Activated CD8-positive, alpha-beta T cell treated with anti-CD3 and anti-CD28 coated beads for 36 hours (primary cell): ENCODE measurements at regions of chr10 and their contacts with region 1.

Region 1: DNA sequence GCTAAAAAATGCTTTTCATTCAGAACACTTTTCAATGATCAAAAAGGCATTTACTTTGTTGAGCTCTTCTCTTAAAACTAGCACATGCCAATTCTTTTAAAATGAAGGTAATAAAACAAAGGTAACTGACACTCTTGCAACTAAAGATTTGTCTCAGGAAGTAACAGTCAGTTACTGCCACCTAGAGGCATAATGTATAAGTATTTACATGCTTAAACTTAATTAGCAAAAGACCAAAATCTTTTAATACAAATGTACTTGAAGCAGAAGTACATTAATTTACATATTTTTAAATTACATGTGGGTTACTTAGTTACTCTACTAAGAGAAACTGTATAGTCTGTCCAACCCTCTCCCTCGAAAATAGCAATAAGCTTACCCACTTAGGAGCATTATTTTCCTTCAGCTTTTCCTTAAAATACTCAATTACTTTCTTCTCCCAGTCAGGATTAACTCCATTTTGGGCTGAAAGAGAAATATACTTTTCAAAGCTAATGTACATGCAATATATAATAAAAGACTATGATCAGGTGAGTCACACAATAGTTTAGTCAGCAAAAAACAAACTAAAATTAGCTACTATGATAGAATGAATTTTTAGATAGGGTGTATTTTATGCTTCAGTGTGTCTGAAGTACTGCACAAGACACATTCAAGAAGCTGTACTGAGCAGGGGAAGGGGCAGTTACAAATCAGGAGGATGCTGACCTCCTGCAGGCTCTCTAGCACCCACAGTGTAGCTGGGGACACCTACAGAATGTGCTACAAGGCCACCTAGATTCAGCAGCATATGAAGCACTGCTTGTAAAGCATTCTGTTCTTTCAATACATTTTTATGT is 13.0 kb downstream of the MCMBP start:
- DNase-seq: no peak
- ATAC-seq: peak; percentile 55
- H3K4me3 Mint-ChIP-seq: no peak overlapping the region
- H3K27ac Mint-ChIP-seq: peak overlapping the region; percentile 10
- H3K4me1 Mint-ChIP-seq: peaks cover 40% of the 10 kb centered on the region
- H3K27me3 Mint-ChIP-seq: no peaks in the 10 kb centered on the region
- CTCF ChIP-seq: peak; percentile 83

Region 2: GRCh38 chr10:119693262-119693957 is 166.2 kb before region 1 on chr10:
- CTCF ChIA-PET with region 1: interaction called, 11 read pairs
- POLR2A ChIA-PET with region 1: no interaction called
- intact Hi-C with region 1: no loop called
- DNase-seq: peak; percentile 36
- ATAC-seq: peak; percentile 78
- H3K4me3 Mint-ChIP-seq: no peak overlapping the region
- H3K27ac Mint-ChIP-seq: no peak overlapping the region
- H3K4me1 Mint-ChIP-seq: peaks cover 7% of the 10 kb centered on the region
- H3K27me3 Mint-ChIP-seq: peaks cover 4% of the 10 kb centered on the region
- CTCF ChIP-seq: no peak

Region 3: DNA sequence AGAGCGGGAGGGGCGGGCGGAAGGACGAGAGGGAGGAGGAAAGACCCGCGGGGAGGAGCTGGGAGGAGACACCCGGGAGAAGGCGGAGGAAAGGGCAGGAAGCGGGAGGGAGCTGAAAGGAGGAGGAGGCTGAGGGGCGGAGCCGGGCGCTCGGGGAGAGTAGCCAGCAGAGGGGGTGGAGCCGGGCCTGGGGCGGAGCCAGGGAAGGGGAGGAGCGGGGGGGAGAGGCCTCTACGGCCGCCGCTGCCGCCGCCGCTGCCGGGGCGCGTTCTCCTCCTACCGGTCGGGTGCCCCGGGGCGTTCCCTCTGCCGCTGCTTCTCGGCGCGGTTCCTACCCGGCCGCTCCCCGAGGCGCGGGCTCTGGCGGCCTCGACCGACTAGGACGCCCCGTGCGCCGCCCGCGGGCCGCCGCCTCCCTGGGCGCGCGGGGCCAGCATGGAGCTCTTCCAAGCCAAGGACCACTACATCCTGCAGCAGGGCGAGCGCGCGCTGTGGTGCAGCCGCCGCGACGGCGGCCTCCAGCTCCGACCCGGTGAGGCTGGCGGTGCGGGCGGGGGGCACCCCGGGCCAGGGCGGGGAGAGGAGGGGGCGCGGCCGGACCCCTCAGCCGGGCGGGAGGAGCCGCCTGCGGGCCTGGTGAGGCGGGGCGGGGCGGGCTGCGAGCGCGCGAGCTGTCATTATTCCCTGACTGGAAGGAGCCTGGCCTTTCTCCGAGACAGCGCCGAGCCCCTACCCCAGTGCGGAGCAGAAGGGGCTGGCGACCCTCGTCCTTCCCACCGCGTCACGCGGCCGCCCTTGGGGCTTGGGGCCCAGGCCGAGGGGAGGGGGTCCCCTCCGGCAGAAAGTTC is 133.6 kb before region 1 on chr10 and contains the start of gene INPP5F:
- CTCF ChIA-PET with region 1: interaction called, 14 read pairs
- POLR2A ChIA-PET with region 1: no interaction called
- intact Hi-C with region 1: no loop called
- DNase-seq: peak; percentile 99
- ATAC-seq: peak; percentile 98
- H3K4me3 Mint-ChIP-seq: peak within 1 kb of the TSS; percentile 82
- H3K27ac Mint-ChIP-seq: peak within 1 kb of the TSS; percentile 76
- H3K4me1 Mint-ChIP-seq: peaks cover 41% of the 10 kb centered on the region
- H3K27me3 Mint-ChIP-seq: no peaks in the 10 kb centered on the region
- CTCF ChIP-seq: peak; percentile 43
- total RNA-seq, gene INPP5F: 10.7 TPM

Region 4: GRCh38 chr10:119849031-119849789 is 10.4 kb before region 1 on chr10:
- CTCF ChIA-PET with region 1: interaction called, 18 read pairs
- POLR2A ChIA-PET with region 1: no interaction called
- intact Hi-C with region 1: no loop called
- DNase-seq: no peak
- ATAC-seq: no peak
- H3K4me3 Mint-ChIP-seq: no peak overlapping the region
- H3K27ac Mint-ChIP-seq: no peak overlapping the region
- H3K4me1 Mint-ChIP-seq: peaks cover 4% of the 10 kb centered on the region
- H3K27me3 Mint-ChIP-seq: no peaks in the 10 kb centered on the region
- CTCF ChIP-seq: no peak